GM13976 (cell line): ENCODE measurements at regions of chr4 and their contacts with region 1.

Region 1: GRCh38 chr4:93791570-93792195 is 36.9 kb upstream of the ATOH1 start:
- DNase-seq: peak; percentile 50
- CTCF ChIP-seq: peak; percentile 78

Region 2: GRCh38 chr4:93437991-93438390 is 353.7 kb before region 1 on chr4:
- in situ Hi-C with region 1: no loop called
- DNase-seq: no peak
- CTCF ChIP-seq: no peak

Region 3: GRCh38 chr4:94127707-94128328 is 336.1 kb after region 1 on chr4:
- in situ Hi-C with region 1: loop called (anchors 25 kb)
- DNase-seq: peak; percentile 29
- CTCF ChIP-seq: peak; percentile 6